ENCODE measurements at regions of chr1 and their contacts with region 1.

Region 1: DNA sequence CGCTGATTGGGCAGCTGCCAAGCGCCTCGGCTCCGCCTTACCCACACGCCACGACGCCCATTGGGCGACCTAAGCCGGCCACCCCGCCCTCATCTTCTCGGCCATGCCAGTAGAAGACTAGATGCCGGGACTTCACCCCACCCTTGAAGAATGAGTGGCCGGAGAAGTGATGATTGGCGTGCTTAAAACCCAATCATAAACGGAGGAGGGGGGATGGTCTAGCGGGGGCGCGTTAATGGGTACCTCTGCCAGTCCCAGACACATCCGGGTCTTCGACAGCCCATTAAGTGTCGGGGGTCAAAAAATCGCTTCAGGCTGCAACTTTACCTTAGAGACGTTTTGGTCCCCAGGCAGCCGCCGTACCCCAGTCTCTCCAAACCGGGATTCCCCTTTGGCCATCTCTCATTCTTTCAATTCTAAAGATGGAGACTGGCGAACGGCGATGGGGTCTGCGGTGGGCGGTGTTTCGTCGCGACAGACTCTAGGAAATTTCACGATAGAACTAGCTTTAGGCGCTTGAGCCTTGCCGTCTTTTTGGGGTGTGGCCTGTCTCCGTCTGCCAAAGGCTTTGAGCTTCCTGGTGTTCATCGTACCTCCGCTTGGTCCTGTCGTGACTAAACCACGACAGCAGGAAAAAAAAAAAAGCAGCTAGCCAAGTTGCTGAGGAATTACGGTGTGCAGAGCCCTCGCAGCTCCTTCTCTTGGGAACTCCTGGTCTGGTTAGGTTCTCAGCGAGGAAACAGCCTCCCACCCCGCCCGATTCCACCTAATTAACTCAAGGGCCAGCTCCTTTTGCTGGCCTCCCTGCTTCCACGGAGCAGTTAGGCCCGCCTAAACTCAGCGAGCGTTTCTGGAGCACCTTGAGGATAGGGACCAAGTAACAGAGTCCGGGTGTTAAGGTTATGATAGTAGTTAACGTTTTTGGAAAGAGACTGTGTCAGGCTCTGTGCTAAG is at the start of gene GATAD2B:
- DNase-seq: peak; percentile 100
- H3K4me3 Mint-ChIP-seq: peak within 1 kb of the TSS; percentile 81
- H3K27ac Mint-ChIP-seq: peak within 1 kb of the TSS; percentile 94
- H3K4me1 Mint-ChIP-seq: peaks cover 36% of the 10 kb centered on the region
- H3K27me3 Mint-ChIP-seq: no peaks in the 10 kb centered on the region
- total RNA-seq, gene GATAD2B: 69.0 to 70.2 TPM

Region 2: DNA sequence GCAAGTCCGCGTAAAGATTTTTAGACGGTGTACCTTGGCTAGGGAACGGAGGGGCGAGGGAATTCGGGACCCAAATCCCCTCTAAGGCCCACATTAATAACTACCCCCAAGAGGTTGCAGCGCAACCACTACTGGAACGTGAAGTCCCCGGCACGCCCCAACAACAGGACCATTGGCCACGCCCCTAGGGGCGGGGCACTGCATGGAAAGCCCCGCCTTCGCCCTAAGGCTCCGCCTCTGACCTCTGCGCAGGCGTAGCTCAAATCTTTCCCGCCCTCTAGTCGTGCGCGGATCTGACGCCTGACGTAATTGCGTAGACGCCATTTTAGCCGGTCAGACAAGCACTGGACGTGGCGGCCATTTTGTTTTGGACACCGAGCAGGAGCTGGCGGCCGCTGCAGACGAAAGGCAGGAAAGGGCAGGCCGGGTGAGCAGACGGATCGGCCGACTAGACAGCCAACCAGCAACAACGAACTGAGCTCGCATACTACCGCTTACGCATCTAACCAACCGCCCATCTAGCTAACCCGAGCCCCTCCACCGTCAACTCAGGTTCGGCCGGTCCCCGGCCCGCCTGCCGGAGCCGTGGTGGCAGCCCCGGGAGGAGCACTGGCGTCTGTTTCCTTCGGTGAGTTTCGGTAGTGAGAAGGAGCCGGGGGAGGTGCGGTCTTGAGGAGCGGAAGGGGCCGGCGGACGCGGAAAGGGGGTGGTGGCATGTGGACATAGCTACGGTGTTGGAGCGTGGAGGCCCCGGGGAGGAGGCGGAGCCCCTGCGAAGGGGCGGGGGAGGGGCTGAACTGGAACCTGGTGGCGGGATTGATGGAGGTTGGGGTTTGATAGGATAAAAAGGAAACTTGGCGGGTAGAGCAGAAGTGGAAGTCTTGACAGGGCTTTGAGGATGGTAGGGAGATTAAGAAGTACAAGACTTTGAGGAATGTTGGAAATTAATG is 289.3 kb before region 1 on chr1 and contains the start of gene CHTOP:
- CTCF ChIA-PET with region 1: interaction called, 4 read pairs
- intact Hi-C with region 1: loop called (anchors 1 kb)
- DNase-seq: peak; percentile 98
- H3K4me3 Mint-ChIP-seq: peak within 1 kb of the TSS; percentile 90
- H3K27ac Mint-ChIP-seq: peak within 1 kb of the TSS; percentile 100
- H3K4me1 Mint-ChIP-seq: peaks cover 45% of the 10 kb centered on the region
- H3K27me3 Mint-ChIP-seq: no peaks in the 10 kb centered on the region
- total RNA-seq, gene CHTOP: 88.2 to 91.3 TPM

Region 3: GRCh38 chr1:153796791-153797659 is 126.2 kb before region 1 on chr1:
- CTCF ChIA-PET with region 1: interaction called, 12 read pairs
- intact Hi-C with region 1: loop called (anchors 1 kb)
- DNase-seq: peak; percentile 95
- H3K4me3 Mint-ChIP-seq: no peak overlapping the region
- H3K27ac Mint-ChIP-seq: no peak overlapping the region
- H3K4me1 Mint-ChIP-seq: peaks cover 2% of the 10 kb centered on the region
- H3K27me3 Mint-ChIP-seq: no peaks in the 10 kb centered on the region

Region 4: DNA sequence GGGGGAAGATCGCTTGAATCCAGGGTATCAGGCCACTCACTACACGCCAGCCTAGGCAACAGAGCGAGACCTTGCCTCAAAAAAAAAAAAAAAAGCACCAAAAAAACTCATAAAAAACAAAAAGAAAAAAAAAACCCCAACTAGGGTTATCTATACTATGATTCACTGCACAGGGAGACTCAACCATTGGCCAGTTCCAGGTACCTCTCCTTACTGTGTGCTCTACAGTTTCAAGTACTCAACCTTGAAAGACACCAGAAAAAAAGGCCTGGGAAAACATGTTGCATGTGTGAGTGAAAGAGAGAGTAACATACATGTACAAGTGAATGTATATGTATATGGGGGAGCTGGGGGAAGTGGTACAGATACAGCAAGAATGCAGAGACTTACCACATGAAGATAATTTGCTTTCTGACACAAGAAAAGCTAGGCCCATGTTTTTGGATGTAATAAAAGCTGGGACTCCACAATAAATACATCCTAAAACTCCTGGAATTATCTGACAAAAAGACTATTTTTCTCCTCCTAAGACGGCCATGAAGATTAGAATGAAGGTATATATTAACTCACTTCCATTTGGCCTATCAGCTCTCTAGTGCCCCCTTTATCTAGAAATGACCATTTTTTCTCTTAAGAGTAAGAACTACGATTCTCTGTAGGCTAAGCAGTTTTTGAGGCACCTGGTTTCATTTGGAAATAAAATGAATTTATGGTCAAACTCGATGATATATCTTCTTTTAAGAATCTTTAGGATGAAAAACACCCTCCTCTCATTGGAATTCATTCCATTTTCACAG is 95.9 kb before region 1 on chr1:
- CTCF ChIA-PET with region 1: interaction called, 7 read pairs
- intact Hi-C with region 1: loop called (anchors 5 kb)
- DNase-seq: no peak
- H3K4me3 Mint-ChIP-seq: no peak overlapping the region
- H3K27ac Mint-ChIP-seq: no peak overlapping the region
- H3K4me1 Mint-ChIP-seq: peaks cover 13% of the 10 kb centered on the region
- H3K27me3 Mint-ChIP-seq: no peaks in the 10 kb centered on the region

Region 5: DNA sequence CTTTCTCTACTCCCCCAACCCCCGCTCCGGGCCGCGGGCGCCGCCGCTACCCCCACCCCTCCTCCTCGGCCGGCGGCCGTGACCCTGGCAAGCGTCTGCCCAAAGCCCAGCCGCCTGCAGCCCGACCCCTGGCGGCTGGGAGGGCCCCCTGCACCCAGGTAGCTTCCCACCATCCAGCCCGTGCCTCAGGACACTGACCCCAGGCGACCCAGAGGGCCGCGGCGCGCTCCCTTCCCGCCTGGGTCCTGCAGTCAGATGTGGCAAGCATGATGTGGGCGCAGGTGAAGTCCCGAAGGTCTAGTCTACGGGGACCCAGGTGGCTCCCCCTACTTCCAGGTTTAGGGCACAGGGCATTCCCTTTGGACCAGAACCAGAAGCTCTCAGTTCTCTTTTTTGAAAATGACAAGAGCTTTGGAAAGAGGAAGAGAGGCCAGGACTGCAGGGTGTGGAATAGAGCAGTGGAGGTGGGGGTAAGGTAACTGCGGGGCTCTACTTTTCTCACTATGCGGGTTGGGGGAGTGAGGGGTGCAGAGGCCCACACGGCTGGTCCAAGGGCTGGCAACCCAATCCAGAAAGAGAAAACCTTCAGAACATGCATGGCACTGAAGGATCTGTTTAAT is 23.5 kb after region 1 on chr1 and contains the start of gene DENND4B:
- CTCF ChIA-PET with region 1: interaction called, 5 read pairs
- intact Hi-C with region 1: loop called (anchors 1 kb)
- DNase-seq: peak; percentile 71
- H3K4me3 Mint-ChIP-seq: peak within 1 kb of the TSS; percentile 92
- H3K27ac Mint-ChIP-seq: peak within 1 kb of the TSS; percentile 95
- H3K4me1 Mint-ChIP-seq: peaks cover 21% of the 10 kb centered on the region
- H3K27me3 Mint-ChIP-seq: no peaks in the 10 kb centered on the region
- total RNA-seq, gene DENND4B: 124 to 130 TPM

Region 6: DNA sequence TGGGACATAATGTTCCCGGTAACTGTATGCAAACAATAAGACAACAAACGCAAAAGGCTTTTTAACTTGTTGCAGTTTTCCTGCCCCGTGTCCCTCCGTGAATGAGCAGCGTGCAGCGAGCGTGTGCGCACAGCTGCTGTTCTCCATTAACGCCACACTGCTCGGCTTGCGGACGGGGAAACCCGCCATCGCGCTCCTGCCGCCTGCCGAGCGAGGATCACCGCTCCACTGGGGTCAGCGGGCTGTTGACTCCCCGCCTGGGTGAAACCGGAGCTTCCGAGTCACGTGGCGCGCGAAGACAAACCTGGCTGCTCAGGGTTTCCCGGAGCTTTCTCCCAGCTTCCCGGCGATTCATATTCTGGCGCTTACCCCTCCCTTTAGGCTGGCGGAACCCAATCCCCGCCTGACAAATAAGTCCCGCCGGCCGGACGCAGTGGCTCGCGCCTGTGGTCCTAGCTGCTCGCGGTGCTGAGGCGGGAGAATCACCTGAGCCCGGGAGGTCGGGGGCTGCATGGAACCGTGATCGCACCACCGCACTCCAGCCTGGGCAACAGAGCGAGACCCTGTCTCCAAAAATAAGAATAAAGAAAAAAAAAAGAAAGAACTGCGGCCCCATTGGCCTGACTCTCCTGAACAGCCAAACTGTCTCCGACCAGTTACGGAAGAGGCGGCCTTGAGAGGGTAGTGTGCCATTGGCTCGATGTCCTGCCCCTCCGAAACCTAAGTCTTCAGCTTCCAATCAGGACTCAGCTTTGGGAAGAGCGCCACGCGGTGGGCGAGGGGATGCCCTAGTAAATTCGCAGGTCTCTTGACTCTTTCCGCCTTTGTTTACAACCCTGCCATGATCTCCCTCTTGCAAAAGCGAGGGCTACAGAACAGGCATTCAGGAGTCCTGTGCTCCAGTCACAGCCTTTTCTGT is 44.1 kb after region 1 on chr1 and contains the start of gene CREB3L4:
- CTCF ChIA-PET with region 1: interaction called, 3 read pairs
- intact Hi-C with region 1: loop called (anchors 1 kb)
- DNase-seq: peak; percentile 90
- H3K4me3 Mint-ChIP-seq: peak within 1 kb of the TSS; percentile 85
- H3K27ac Mint-ChIP-seq: peak within 1 kb of the TSS; percentile 94
- H3K4me1 Mint-ChIP-seq: peaks cover 42% of the 10 kb centered on the region
- H3K27me3 Mint-ChIP-seq: no peaks in the 10 kb centered on the region
- total RNA-seq, gene CREB3L4: 5.6 to 7.4 TPM